ENCODE measurements at regions of chr7 and their contacts with region 1.

Region 1: GRCh38 chr7:20201380-20201779 is 15.8 kb downstream of the MACC1 start:
- DNase-seq: peak; percentile 66 to 82 (median 74)
- H3K4me3 ChIP-seq: no peak overlapping the region
- H3K4me3 Mint-ChIP-seq: peak overlapping the region in 1 of 2 donors; percentile 21
- H3K27ac ChIP-seq: peak overlapping the region; percentile 36 to 86
- H3K27ac Mint-ChIP-seq: peak overlapping the region; percentile 83 to 97 (median 94)
- H3K4me1 ChIP-seq: peaks cover 26 to 40% of the 10 kb centered on the region in 2 donors
- H3K4me1 Mint-ChIP-seq: peaks cover 33% of the 10 kb centered on the region
- H3K27me3 ChIP-seq: no peaks in the 10 kb centered on the region
- H3K27me3 Mint-ChIP-seq: peaks cover 0 to 2% (median 0%) of the 10 kb centered on the region in 3 donors
- CTCF ChIP-seq: no peak

Region 2: DNA sequence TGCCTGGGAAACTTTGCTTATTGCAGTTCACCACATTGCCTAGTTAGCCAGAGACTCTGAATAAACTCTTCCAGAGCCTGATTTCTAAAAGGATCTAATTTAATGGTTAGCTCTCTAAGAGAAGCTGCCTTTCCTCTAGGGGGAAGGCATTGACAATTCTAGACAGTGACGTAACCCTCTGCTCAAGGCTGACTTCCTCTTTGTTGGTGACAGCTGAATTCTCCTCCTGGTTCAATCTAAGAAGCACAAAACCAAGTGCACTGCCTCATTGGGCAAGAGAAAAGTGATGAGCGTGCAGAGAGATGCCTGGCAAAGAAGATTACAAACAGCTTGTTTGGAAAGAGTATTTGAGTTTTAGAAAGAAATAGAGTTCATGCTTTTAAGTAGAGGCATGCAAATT is 86.9 kb before region 1 on chr7:
- intact Hi-C with region 1: loop called in 1 of 2 experiments (anchors 5 kb)
- DNase-seq: peak; percentile 93 to 97 (median 95)
- H3K4me3 ChIP-seq: no peak overlapping the region
- H3K4me3 Mint-ChIP-seq: no peak overlapping the region
- H3K27ac ChIP-seq: peak overlapping the region in 1 of 2 donors; percentile 69
- H3K27ac Mint-ChIP-seq: peak overlapping the region; percentile 72 to 90 (median 78)
- H3K4me1 ChIP-seq: peaks cover 16 to 23% of the 10 kb centered on the region in 2 donors
- H3K4me1 Mint-ChIP-seq: peaks cover 19% of the 10 kb centered on the region
- H3K27me3 ChIP-seq: no peaks in the 10 kb centered on the region
- H3K27me3 Mint-ChIP-seq: peaks cover 0 to 5% (median 2%) of the 10 kb centered on the region in 3 donors
- CTCF ChIP-seq: peak; percentile 20

Region 3: GRCh38 chr7:20219446-20220292 is 18.3 kb after region 1 on chr7:
- intact Hi-C with region 1: loop called in 1 of 2 experiments (anchors 2 kb)
- DNase-seq: peak; percentile 96 to 100 (median 98)
- H3K4me3 ChIP-seq: peak overlapping the region in 1 of 3 experiments; percentile 40
- H3K4me3 Mint-ChIP-seq: peak overlapping the region in 1 of 2 donors; percentile 59
- H3K27ac ChIP-seq: peak overlapping the region; percentile 88 to 99
- H3K27ac Mint-ChIP-seq: peak overlapping the region; percentile 87 to 97 (median 96)
- H3K4me1 ChIP-seq: peaks cover 33 to 43% of the 10 kb centered on the region in 2 donors
- H3K4me1 Mint-ChIP-seq: peaks cover 55% of the 10 kb centered on the region
- H3K27me3 ChIP-seq: no peaks in the 10 kb centered on the region
- H3K27me3 Mint-ChIP-seq: peaks cover 0 to 1% (median 0%) of the 10 kb centered on the region in 3 donors
- CTCF ChIP-seq: no peak

Region 4: GRCh38 chr7:20249920-20250319 is 48.5 kb after region 1 on chr7:
- intact Hi-C with region 1: no loop called
- DNase-seq: no peak
- H3K4me3 ChIP-seq: no peak overlapping the region
- H3K4me3 Mint-ChIP-seq: no peak overlapping the region
- H3K27ac ChIP-seq: no peak overlapping the region
- H3K27ac Mint-ChIP-seq: no peak overlapping the region
- H3K4me1 ChIP-seq: no peaks in the 10 kb centered on the region
- H3K4me1 Mint-ChIP-seq: no peaks in the 10 kb centered on the region
- H3K27me3 ChIP-seq: no peaks in the 10 kb centered on the region
- H3K27me3 Mint-ChIP-seq: no peaks in the 10 kb centered on the region
- CTCF ChIP-seq: no peak

Region 5: DNA sequence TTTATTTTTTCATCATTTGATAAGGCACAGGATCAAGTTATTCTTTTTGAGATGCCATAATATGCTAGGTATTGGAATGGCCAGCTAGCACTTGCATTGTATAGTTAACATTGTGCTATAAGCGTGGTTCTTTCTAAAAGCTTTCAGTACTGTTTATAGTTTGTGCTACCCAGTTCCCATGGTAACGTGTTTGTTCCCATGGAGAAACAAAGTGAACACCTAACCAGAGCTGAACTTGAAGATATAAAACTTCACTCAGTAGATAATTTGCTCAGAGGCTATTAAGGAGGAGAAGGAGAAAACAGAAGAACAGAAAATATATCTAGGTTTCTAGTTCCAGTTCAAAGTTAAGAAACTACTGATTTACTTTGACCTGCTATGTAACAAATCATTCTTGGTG is 105.7 kb after region 1 on chr7:
- intact Hi-C with region 1: loop called in 1 of 2 experiments (anchors 10 kb)
- DNase-seq: peak in 2 of 3 donors; percentile 14 to 18
- H3K4me3 ChIP-seq: no peak overlapping the region
- H3K4me3 Mint-ChIP-seq: no peak overlapping the region
- H3K27ac ChIP-seq: no peak overlapping the region
- H3K27ac Mint-ChIP-seq: no peak overlapping the region
- H3K4me1 ChIP-seq: peaks cover 4 to 14% of the 10 kb centered on the region in 2 donors
- H3K4me1 Mint-ChIP-seq: peaks cover 19% of the 10 kb centered on the region
- H3K27me3 ChIP-seq: no peaks in the 10 kb centered on the region
- H3K27me3 Mint-ChIP-seq: no peaks in the 10 kb centered on the region
- CTCF ChIP-seq: no peak

Region 6: GRCh38 chr7:20466543-20467021 is 265.2 kb after region 1 on chr7:
- intact Hi-C with region 1: loop called in 1 of 2 experiments (anchors 5 kb)
- DNase-seq: peak; percentile 92 to 99 (median 96)
- H3K4me3 ChIP-seq: no peak overlapping the region
- H3K4me3 Mint-ChIP-seq: no peak overlapping the region
- H3K27ac ChIP-seq: peak overlapping the region; percentile 74 to 96
- H3K27ac Mint-ChIP-seq: peak overlapping the region; percentile 92 to 96 (median 95)
- H3K4me1 ChIP-seq: peaks cover 52 to 61% of the 10 kb centered on the region in 2 donors
- H3K4me1 Mint-ChIP-seq: peaks cover 52% of the 10 kb centered on the region
- H3K27me3 ChIP-seq: no peaks in the 10 kb centered on the region
- H3K27me3 Mint-ChIP-seq: peaks cover 0 to 5% (median 2%) of the 10 kb centered on the region in 3 donors
- CTCF ChIP-seq: no peak

Measured in CD14-positive monocyte (primary cell).